ENCODE measurements at regions of chr18 and their contacts with region 1.

Region 1: GRCh38 chr18:35040988-35041814 is at the start of gene MAPRE2:
- DNase-seq: peak; percentile 99
- H3K4me3 Mint-ChIP-seq: peak within 1 kb of the TSS; percentile 96
- H3K27ac Mint-ChIP-seq: peak within 1 kb of the TSS; percentile 95
- H3K4me1 Mint-ChIP-seq: peaks cover 59% of the 10 kb centered on the region
- H3K27me3 Mint-ChIP-seq: no peaks in the 10 kb centered on the region
- total RNA-seq, gene MAPRE2: 62.5 to 66.2 TPM

Region 2: GRCh38 chr18:34857320-34857719 is 183.9 kb before region 1 on chr18:
- CTCF ChIA-PET with region 1: no interaction called
- intact Hi-C with region 1: loop called (anchors 1 kb)
- DNase-seq: no peak
- H3K4me3 Mint-ChIP-seq: no peak overlapping the region
- H3K27ac Mint-ChIP-seq: no peak overlapping the region
- H3K4me1 Mint-ChIP-seq: peaks cover 32% of the 10 kb centered on the region
- H3K27me3 Mint-ChIP-seq: peaks cover 11% of the 10 kb centered on the region

Region 3: GRCh38 chr18:35029770-35030169 is 11.4 kb before region 1 on chr18:
- CTCF ChIA-PET with region 1: interaction called, 65 read pairs
- intact Hi-C with region 1: loop called (anchors 1 kb)
- DNase-seq: no peak
- H3K4me3 Mint-ChIP-seq: peak overlapping the region; percentile 70
- H3K27ac Mint-ChIP-seq: peak overlapping the region; percentile 92
- H3K4me1 Mint-ChIP-seq: peaks cover 61% of the 10 kb centered on the region
- H3K27me3 Mint-ChIP-seq: no peaks in the 10 kb centered on the region

Region 4: GRCh38 chr18:35114305-35114704 is 73.1 kb after region 1 on chr18:
- CTCF ChIA-PET with region 1: no interaction called
- intact Hi-C with region 1: no loop called
- DNase-seq: no peak
- H3K4me3 Mint-ChIP-seq: no peak overlapping the region
- H3K27ac Mint-ChIP-seq: no peak overlapping the region
- H3K4me1 Mint-ChIP-seq: peaks cover 40% of the 10 kb centered on the region
- H3K27me3 Mint-ChIP-seq: no peaks in the 10 kb centered on the region

Region 5: DNA sequence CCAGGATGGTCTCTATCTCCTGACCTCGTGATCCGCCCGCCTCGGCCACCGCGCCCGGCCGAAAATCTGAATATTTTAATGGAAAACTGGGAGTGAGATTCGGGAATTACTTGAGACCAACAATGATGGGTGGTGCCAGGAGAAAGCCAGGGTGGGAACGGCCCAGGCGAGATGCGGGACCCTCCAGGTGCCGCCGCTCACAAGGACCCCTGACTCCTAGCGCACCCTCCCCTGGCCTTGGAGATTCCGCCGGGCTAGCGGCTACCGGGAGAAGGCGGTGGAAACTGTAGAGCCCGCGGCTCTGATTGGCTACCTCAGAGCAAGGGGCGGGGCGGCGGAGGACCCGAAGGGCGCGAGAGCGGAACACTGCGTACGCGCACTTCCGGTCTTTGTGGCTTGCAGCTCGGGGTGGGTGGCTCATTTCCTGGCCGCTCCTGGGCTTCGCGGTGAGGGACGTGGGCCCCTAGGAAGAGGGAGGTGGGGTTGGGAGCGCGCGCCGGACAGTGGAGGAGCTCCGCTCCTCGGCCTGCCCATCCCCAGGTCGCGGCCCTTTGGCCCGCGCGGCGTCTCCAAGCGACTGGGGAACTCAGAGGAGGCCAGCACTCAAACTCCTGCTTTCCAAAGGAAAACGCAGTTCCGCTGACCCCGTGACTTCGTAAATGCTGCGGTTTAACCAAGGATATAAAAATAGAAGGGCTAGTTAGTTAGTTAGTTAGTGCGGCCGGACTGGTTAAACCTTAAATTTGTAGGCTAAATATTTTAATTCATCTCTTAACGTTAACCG is 199.7 kb after region 1 on chr18 and contains the start of gene ZNF397:
- CTCF ChIA-PET with region 1: no interaction called
- intact Hi-C with region 1: loop called (anchors 1 kb)
- DNase-seq: peak; percentile 98
- H3K4me3 Mint-ChIP-seq: peak within 1 kb of the TSS; percentile 94
- H3K27ac Mint-ChIP-seq: peak within 1 kb of the TSS; percentile 99
- H3K4me1 Mint-ChIP-seq: peaks cover 38% of the 10 kb centered on the region
- H3K27me3 Mint-ChIP-seq: no peaks in the 10 kb centered on the region
- total RNA-seq, gene ZNF397: 22.6 to 23.2 TPM

Region 6: DNA sequence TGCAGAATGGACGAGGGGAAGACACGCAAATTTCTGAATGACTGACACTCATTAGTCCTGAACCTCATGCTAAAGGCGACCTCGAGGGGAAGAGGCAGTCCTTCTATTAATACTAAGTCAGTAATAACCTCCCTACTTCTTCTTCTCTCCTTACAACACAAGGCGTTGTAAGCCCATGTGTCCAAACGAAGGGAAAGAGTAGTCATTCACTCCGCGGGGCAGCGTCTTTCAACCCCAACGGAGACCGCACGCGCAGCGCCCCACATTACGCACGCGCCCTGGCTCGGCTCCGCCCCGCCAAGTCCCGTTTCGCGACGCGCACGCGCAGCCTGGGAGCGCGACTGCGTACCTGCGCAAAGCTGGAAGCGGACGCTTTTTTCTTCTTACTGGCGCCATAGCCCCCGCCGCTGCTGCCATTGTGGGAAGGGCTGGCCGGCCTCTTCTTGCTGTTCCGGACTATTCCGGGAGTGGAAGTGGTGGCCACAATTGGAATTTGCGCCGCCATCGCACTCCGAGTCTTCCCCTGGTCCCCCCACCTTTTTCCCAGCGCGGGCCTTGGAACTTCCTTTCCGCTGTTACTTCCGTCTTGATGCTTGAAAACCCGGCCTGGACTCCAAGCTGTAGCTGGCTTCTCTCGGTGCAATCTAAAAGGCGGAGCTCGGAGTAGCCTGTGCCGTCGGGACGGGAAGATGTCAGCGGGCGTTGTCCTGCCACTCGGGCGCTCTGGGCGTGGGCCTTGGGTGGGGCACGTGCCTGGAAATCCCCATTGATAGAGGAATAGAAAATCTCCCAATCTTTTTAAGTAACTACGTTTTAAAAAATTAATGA is 456.4 kb after region 1 on chr18 and contains the start of gene INO80C:
- CTCF ChIA-PET with region 1: no interaction called
- intact Hi-C with region 1: loop called (anchors 5 kb)
- DNase-seq: peak; percentile 93
- H3K4me3 Mint-ChIP-seq: peak within 1 kb of the TSS; percentile 96
- H3K27ac Mint-ChIP-seq: peak within 1 kb of the TSS; percentile 99
- H3K4me1 Mint-ChIP-seq: peaks cover 23% of the 10 kb centered on the region
- H3K27me3 Mint-ChIP-seq: no peaks in the 10 kb centered on the region
- total RNA-seq, gene INO80C: 34.4 to 36.6 TPM

Region 7: DNA sequence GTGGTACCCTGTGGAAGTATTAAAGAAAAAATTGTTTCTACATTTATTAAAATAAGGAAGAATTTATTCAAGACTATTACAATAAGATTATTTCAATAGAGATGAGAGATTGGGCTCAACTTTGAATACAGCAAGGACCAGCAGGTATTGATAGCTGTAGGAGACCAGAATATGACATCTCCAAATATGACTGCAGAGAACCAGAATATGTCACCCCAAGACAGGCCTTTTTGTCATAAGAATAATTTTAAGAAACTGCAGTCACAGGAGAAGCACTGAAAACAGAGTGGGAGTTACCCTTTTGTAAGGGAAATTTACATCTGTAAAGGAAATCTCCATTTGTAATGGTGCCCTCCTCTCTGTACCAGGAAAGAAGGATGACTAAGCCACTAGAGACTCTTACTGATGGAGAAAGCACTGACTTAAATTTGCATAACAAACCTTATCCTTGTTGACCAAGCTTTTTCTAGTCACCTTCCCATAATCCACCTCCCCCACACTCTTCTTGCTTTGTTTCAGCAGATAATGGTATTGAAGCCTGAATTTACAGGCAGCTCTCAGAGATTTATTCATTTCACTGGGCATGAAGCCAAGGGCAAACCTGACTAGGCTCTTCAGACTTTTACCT is 786.2 kb after region 1 on chr18:
- CTCF ChIA-PET with region 1: no interaction called
- intact Hi-C with region 1: loop called (anchors 5 kb)
- DNase-seq: peak; percentile 62
- H3K4me3 Mint-ChIP-seq: no peak overlapping the region
- H3K27ac Mint-ChIP-seq: peak overlapping the region; percentile 75
- H3K4me1 Mint-ChIP-seq: peaks cover 15% of the 10 kb centered on the region
- H3K27me3 Mint-ChIP-seq: peaks cover 22% of the 10 kb centered on the region

Measured in activated naive CD4-positive, alpha-beta T cell treated with anti-CD3 and anti-CD28 coated beads for 36 hours (primary cell).